Right ventricle myocardium inferior (tissue), 1 donor: ENCODE measurements at regions of chr17 and their contacts with region 1.

Region 1: GRCh38 chr17:77372444-77373298 is 231.9 kb downstream of the SEC14L1 start:
- DNase-seq: peak; percentile 95
- ATAC-seq: peak; percentile 68

Region 2: DNA sequence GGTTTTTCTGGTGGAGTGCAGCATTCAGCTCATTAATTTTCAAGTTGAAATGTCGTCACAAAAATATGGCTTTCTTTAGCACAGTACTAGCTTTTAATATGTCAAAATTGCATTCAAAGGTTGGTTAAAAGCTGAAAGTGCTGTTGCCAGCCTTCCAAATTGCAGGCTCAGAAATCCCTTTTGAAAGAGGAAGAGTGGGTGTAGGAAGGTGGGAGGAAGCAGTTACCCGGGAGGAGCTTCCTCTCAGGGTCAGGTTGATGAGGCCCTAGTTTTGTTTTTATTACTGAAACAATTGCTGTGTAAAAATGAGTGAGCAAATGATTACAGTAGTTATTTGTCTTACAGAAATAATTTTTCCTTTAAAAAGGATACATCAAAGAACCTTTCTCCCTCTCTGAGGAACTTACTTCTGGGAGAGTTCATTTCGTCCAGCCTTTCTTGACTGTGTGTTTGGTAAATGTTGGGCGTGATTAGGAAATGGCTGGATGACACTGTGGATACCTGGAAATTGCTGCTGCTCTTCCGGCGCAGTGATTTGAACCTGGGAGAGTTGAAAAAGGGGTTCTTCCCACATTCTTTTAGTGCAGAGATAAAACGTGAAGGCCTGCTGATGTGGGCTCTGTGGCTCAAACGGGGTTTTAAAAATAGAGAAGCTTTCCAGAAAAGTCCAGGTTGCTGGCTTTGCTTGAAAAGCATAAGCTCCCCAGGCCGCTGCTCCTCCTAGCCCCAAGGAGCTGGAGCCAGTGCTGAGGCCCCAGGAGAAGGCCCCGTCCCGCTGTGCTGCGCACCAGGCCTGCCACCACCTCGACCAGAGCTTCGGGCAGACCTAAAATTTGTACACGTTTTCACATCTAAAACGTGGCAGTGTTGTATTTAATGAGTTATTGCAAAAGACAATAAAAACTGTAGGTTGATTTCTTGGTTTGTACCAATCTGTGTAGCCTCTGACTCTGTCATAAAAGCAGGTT is 190.2 kb before region 1 on chr17:
- intact Hi-C with region 1: no loop called
- DNase-seq: no peak
- ATAC-seq: no peak

Region 3: DNA sequence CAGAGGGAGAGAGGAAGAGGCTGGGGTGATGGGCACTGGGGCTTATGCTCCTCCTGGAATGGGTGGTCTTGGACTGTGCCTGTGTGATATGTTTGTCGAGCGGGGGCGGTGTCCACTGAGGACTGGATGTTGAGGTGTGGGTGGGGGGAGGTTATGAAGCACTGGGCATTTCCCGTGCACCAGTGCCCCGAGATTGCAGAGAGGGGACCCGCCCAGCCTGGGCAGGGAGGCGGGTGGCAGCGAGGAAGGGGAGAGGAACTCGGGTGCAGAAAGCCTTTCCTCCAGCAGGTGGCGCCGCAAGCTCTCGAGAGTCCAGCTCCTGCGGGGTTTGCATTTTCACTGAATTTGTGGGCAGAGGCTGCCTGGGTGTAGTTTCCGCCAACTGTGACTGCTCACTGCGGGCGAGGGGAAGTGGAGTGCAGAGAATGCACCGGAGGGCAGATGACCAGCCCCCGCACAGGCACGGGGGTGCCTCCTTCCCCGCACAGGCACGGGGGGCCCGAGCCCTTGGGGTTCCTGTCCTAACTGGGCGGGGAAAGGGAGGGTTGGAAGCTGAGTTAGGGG is 41.3 kb before region 1 on chr17:
- intact Hi-C with region 1: loop called (anchors 2 kb)
- DNase-seq: peak; percentile 96
- ATAC-seq: peak; percentile 85

Region 4: GRCh38 chr17:77349976-77350830 is 22.5 kb before region 1 on chr17:
- intact Hi-C with region 1: loop called (anchors 2 kb)
- DNase-seq: peak; percentile 45
- ATAC-seq: no peak

Region 5: GRCh38 chr17:77400445-77400870 is 27.8 kb after region 1 on chr17:
- intact Hi-C with region 1: no loop called
- DNase-seq: peak; percentile 81
- ATAC-seq: peak; percentile 59